SK-N-SH (cell line): ENCODE measurements at regions of chr6 and their contacts with region 1.

Region 1: DNA sequence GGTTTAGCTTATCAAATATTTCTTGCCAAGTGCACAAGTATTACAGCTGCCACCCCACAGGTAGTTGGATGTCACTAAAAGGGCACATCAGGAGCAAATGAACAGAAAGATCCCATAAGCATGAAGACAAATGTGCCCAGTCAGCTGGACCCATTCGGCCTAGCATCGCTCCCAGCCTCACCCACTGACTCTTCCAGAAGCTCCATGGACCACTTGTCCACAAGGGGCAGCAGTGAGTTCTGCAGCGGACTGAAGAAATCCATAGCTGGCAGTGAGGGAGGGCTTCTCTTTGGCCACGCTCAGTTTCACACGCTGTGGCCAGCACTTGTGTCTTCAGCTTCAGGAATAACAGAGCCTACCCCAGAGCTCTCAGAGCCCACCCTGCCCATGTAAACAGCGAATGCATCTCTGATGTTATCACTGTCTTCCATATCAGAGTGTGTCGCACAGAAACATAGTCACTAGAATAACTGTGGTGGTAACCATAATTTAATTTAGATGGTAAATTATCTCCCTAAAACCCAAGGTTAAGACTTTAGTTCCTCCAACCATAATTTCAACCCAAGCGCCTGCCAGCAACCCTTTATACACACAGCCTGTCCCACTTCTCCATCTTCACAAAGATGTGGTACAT is 15.8 kb downstream of the CGA start:
- DNase-seq: peak; percentile 69
- H3K4me3 ChIP-seq: peak overlapping the region in 1 of 2 experiments; percentile 24; a peak in 1 of 4 replicates
- H3K27ac ChIP-seq: no peak overlapping the region
- H3K4me1 ChIP-seq: no peaks in the 10 kb centered on the region
- H3K27me3 ChIP-seq: no peaks in the 10 kb centered on the region
- CTCF ChIP-seq: peak; percentile 85
- EP300 ChIP-seq: no peak
- RAD21 ChIP-seq: peak; percentile 55

Region 2: DNA sequence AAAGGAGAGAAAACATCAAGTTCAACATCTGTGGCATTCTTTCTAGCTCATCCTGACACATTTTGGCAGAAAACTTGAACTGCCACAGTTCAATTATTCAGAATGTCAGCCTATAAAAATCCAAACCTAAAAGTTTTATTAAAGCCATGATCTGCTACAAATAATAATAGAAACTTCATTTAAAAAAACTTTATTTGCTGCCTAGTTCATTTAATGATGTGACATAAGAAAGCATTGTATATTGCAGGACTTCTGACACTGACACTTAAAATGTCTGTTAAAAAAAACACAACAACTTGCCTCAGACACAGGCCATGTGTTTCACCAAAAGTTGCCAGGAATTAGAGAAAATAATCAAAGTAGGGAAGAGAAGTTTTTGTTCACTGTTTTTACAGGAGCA is 230.1 kb before region 1 on chr6:
- CTCF ChIA-PET with region 1: no interaction called
- POLR2A ChIA-PET with region 1: no interaction called
- DNase-seq: no peak
- H3K4me3 ChIP-seq: no peak overlapping the region; a peak in 1 of 4 replicates
- H3K27ac ChIP-seq: no peak overlapping the region
- H3K4me1 ChIP-seq: no peaks in the 10 kb centered on the region
- H3K27me3 ChIP-seq: no peaks in the 10 kb centered on the region
- CTCF ChIP-seq: no peak
- EP300 ChIP-seq: no peak
- RAD21 ChIP-seq: no peak

Region 3: DNA sequence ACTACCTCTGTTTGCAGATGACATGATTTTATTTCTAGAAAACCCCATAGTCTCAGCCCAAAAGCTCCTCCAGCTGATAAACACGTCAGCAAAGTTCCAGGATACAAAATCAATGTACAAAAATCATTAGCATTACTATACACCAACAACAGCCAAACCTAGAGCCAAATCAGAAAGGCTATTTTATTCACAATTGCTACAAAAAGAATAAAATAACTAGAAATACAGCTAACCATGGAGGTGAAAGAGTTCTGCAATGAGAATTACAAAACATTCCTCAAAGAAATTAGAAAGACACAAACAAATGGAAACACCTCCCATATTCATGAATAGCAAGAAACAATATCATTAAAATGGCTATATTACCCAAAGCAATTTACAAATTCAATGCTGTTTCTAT is 207.4 kb before region 1 on chr6:
- CTCF ChIA-PET with region 1: no interaction called
- POLR2A ChIA-PET with region 1: no interaction called
- DNase-seq: no peak
- H3K4me3 ChIP-seq: no peak overlapping the region
- H3K27ac ChIP-seq: no peak overlapping the region
- H3K4me1 ChIP-seq: no peaks in the 10 kb centered on the region
- H3K27me3 ChIP-seq: no peaks in the 10 kb centered on the region
- CTCF ChIP-seq: no peak
- EP300 ChIP-seq: no peak
- RAD21 ChIP-seq: no peak

Region 4: GRCh38 chr6:87066449-87067333 is 12.4 kb before region 1 on chr6:
- CTCF ChIA-PET with region 1: interaction called, 47 read pairs
- POLR2A ChIA-PET with region 1: no interaction called
- DNase-seq: peak; percentile 59
- H3K4me3 ChIP-seq: peak overlapping the region in 1 of 2 experiments; percentile 17; a peak in 1 of 4 replicates
- H3K27ac ChIP-seq: no peak overlapping the region
- H3K4me1 ChIP-seq: peaks cover 0 to 6% of the 10 kb centered on the region in 2 experiments; a peak in 1 of 4 replicates
- H3K27me3 ChIP-seq: no peaks in the 10 kb centered on the region
- CTCF ChIP-seq: peak; percentile 89
- EP300 ChIP-seq: no peak
- RAD21 ChIP-seq: peak; percentile 94

Region 5: DNA sequence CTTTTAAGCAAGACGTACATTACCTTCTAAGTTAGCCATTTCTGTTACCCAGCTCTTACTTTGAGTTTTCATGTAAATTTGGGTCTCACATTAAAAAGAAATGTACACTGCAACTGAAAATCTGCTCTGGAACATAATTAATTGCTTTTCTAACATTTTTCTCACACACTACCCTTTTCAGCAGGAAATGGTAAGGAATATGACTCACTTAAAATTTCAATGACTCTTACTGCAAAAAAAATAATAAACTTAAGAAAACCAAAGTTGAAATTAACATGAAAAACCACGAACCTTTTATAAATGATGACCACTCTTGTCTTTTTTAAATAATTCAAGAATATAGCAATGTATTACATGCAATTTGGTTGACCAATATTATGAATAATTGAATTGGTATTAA is 14.6 kb after region 1 on chr6:
- CTCF ChIA-PET with region 1: interaction called, 14 read pairs
- POLR2A ChIA-PET with region 1: no interaction called
- DNase-seq: no peak
- H3K4me3 ChIP-seq: 0 out of 4 replicates have a peak overlapping the region, but pooled peaks of 1 of the 2 experiments have one; percentile 3
- H3K27ac ChIP-seq: peak overlapping the region in 1 of 2 experiments; percentile 68; a peak in 2 of 4 replicates
- H3K4me1 ChIP-seq: peaks cover 0 to 9% of the 10 kb centered on the region in 2 experiments; a peak in 1 of 4 replicates
- H3K27me3 ChIP-seq: no peaks in the 10 kb centered on the region
- CTCF ChIP-seq: no peak
- EP300 ChIP-seq: no peak
- RAD21 ChIP-seq: no peak

Region 6: GRCh38 chr6:87164004-87164403 is 84.9 kb after region 1 on chr6:
- CTCF ChIA-PET with region 1: no interaction called
- POLR2A ChIA-PET with region 1: no interaction called
- DNase-seq: no peak
- H3K4me3 ChIP-seq: no peak overlapping the region
- H3K27ac ChIP-seq: peak overlapping the region in 1 of 2 experiments; percentile 22; a peak in 1 of 4 replicates
- H3K4me1 ChIP-seq: peaks cover 0 to 6% of the 10 kb centered on the region in 2 experiments; a peak in 1 of 4 replicates
- H3K27me3 ChIP-seq: no peaks in the 10 kb centered on the region
- CTCF ChIP-seq: no peak
- EP300 ChIP-seq: no peak
- RAD21 ChIP-seq: no peak

Region 7: GRCh38 chr6:87180105-87180728 is 101.1 kb after region 1 on chr6:
- CTCF ChIA-PET with region 1: no interaction called
- POLR2A ChIA-PET with region 1: no interaction called
- DNase-seq: no peak
- H3K4me3 ChIP-seq: no peak overlapping the region
- H3K27ac ChIP-seq: no peak overlapping the region; a peak in 1 of 4 replicates
- H3K4me1 ChIP-seq: peaks cover 2 to 4% of the 10 kb centered on the region in 2 experiments; a peak in 3 of 4 replicates
- H3K27me3 ChIP-seq: no peaks in the 10 kb centered on the region
- CTCF ChIP-seq: no peak
- EP300 ChIP-seq: no peak
- RAD21 ChIP-seq: no peak